ENCODE measurements at regions of chr10 and their contacts with region 1.

Region 1: GRCh38 chr10:14528450-14528849 is 197.7 kb upstream of the FRMD4A start:
- DNase-seq: no peak
- ATAC-seq: peak; percentile 79
- H3K4me3 Mint-ChIP-seq: no peak overlapping the region
- H3K27ac Mint-ChIP-seq: peak overlapping the region; percentile 44
- H3K4me1 Mint-ChIP-seq: peaks cover 85% of the 10 kb centered on the region
- H3K27me3 Mint-ChIP-seq: no peaks in the 10 kb centered on the region
- CTCF ChIP-seq: no peak

Region 2: DNA sequence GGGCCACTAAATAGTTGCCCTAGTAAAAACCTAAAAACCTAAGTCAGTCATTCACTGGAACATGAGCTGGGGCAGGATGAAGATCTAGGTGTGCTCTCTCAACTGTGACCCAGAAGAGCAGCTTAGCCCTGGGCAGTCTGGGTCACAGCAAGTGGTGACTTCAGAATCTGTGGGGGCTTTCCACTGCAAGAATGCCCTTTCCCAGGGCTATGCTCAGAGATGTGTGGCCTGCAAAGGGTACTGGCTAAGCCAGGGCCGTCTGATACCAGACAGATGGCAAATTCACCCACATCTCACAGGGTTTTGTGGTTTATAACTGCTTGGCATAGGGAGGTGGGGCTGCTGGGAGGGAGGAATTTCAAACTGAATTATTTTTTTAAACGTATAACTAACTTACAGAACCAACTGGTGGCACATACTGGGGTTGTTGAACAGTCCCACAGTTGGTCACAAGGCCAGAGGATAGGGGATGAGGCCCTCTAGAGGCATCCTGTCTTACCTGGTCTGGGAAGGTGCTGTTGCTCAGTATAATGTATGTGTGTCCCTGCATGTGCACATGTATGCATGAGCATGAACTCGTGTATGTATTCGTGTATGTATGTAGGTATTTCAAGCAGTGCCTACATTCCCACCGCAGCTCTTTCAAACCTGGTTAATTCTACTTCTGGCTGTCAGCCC is 878.5 kb before region 1 on chr10:
- CTCF ChIA-PET with region 1: no interaction called
- POLR2A ChIA-PET with region 1: no interaction called
- intact Hi-C with region 1: no loop called
- DNase-seq: no peak
- ATAC-seq: no peak
- H3K4me3 Mint-ChIP-seq: no peak overlapping the region
- H3K27ac Mint-ChIP-seq: no peak overlapping the region
- H3K4me1 Mint-ChIP-seq: peaks cover 12% of the 10 kb centered on the region
- H3K27me3 Mint-ChIP-seq: no peaks in the 10 kb centered on the region
- CTCF ChIP-seq: no peak

Region 3: DNA sequence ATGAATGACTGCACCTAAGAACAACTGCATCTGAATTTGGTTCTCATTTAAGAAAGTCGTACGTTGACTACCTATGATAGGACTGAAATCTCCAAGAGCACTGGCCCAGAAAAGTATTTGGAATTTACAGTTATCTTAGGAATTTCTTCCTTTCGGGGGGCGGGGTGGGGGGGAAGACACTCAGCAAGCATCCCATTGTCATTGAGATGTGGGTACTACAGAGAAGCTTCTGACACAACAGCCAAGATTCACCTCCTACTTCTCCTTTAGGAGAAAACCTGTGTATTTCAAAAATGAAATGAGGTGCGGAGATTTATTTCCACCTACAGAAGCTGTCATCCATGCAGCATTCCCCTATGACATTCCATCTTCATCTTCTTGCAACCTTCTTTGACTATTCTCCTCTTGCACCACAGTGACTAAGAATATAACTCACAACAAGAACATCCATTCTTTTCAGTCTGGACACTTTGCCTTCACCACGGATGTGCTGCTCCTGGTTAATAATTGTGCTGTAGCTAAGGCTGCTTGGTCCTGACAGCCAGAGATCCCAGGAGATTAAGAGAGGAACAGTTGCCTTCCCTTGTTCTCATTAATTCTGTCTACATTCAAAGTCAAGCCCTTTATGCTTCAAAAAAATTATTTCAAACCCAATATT is 99.3 kb before region 1 on chr10:
- CTCF ChIA-PET with region 1: no interaction called
- POLR2A ChIA-PET with region 1: no interaction called
- intact Hi-C with region 1: no loop called
- DNase-seq: no peak
- ATAC-seq: no peak
- H3K4me3 Mint-ChIP-seq: no peak overlapping the region
- H3K27ac Mint-ChIP-seq: no peak overlapping the region
- H3K4me1 Mint-ChIP-seq: no peaks in the 10 kb centered on the region
- H3K27me3 Mint-ChIP-seq: peaks cover 30% of the 10 kb centered on the region
- CTCF ChIP-seq: no peak

Region 4: DNA sequence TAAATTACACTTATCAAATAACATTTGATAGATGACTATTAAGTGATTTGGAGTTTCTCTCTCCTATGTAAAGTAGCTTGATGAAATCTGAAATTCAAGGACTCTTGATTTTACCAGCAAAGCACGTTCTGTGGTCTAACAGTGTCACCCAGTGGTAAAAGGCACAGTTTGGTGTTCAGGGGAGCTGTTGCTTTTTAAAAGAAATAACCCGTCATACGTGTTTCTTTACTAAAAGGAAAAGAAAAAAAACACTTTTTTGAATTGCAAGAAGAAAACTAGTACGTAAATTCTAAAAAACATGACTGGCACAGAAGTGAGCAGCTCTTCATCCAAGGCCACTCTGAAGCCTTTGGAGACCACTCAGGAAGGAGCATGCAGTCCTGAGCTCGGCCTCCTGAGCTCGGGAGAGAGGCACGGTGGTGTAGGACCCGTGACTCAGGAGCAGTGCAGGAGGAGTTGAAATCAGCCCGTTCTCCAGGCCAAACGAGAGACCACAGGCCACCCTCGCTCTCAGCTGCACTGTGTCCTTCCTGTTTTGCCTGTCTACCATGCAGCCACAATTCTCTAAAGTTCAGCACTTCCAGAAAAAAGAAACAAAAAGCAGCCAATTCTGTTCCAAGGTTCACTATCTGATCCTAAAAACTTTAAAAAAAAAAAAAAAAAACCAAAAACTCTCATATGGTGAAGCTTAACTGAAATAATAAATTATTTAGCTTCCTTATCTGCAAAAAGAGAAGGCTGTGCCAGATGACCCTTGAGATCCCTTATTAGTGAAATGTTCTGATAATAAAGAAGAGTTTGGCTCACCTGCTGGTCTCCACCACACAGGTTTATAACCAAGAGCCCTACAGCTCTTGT is 14.8 kb after region 1 on chr10:
- CTCF ChIA-PET with region 1: interaction called, 10 read pairs
- POLR2A ChIA-PET with region 1: interaction called, 3 read pairs
- intact Hi-C with region 1: no loop called
- DNase-seq: peak; percentile 60
- ATAC-seq: peak; percentile 74
- H3K4me3 Mint-ChIP-seq: peak overlapping the region; percentile 58
- H3K27ac Mint-ChIP-seq: peak overlapping the region; percentile 88
- H3K4me1 Mint-ChIP-seq: peaks cover 83% of the 10 kb centered on the region
- H3K27me3 Mint-ChIP-seq: no peaks in the 10 kb centered on the region
- CTCF ChIP-seq: peak; percentile 32